ENCODE measurements at regions of chr9 and their contacts with region 1.

Region 1: GRCh38 chr9:124708633-124709291 is 62.3 kb downstream of the NR6A1 start:
- H3K4me3 ChIP-seq: no peak overlapping the region
- H3K27ac ChIP-seq: no peak overlapping the region
- H3K4me1 ChIP-seq: no peaks in the 10 kb centered on the region
- CTCF ChIP-seq: no peak

Region 2: GRCh38 chr9:124551472-124552272 is 157.1 kb before region 1 on chr9:
- CTCF ChIA-PET with region 1: interaction called, 58 read pairs
- POLR2A ChIA-PET with region 1: no interaction called
- H3K4me3 ChIP-seq: no peak overlapping the region
- H3K27ac ChIP-seq: no peak overlapping the region
- H3K4me1 ChIP-seq: no peaks in the 10 kb centered on the region
- CTCF ChIP-seq: peak; percentile 39; the same call in 1 of the 2 replicates

Region 3: GRCh38 chr9:124658165-124659017 is 50.4 kb before region 1 on chr9:
- CTCF ChIA-PET with region 1: interaction called, 36 read pairs
- POLR2A ChIA-PET with region 1: interaction called, 7 read pairs
- H3K4me3 ChIP-seq: peak overlapping the region; percentile 57
- H3K27ac ChIP-seq: peak overlapping the region; percentile 72
- H3K4me1 ChIP-seq: peaks cover 6% of the 10 kb centered on the region; the same call in 1 of the 2 replicates
- CTCF ChIP-seq: no peak

Region 4: GRCh38 chr9:124697326-124698200 is 11.2 kb before region 1 on chr9:
- CTCF ChIA-PET with region 1: interaction called, 34 read pairs
- POLR2A ChIA-PET with region 1: interaction called, 3 read pairs
- H3K4me3 ChIP-seq: no peak overlapping the region
- H3K27ac ChIP-seq: no peak overlapping the region
- H3K4me1 ChIP-seq: peaks cover 22% of the 10 kb centered on the region
- CTCF ChIP-seq: no peak

Region 5: DNA sequence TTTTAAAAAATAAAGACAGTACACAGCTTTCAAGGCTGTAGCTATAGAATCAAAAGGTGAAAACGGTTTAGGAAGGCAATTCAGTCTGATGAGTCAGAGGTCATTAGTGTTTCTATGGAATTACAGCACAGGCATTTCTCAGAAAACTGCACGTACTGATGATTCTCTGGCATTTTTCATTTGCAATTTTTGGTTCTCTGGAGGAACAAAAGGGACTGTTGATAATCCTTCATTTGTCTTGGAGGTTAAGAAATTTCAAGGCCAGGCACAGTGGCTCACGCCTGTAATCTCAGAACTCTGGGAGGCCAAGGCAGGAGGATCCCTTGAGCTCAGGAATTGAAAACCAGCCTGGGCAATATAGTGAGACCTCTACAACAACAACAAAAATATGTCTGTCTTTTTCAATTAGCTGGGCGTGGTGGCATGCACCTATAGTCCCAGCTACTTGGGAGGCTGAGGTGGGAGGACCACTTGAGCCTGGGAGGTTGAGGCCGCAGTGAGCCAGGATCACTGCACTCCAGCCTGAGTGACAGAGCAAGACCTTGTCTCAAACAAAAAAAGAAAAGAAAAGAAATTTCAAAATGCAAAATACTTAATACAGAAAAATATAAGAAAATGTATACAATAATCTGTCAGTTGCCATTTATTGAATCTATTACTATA is 35.1 kb after region 1 on chr9:
- CTCF ChIA-PET with region 1: interaction called, 19 read pairs
- POLR2A ChIA-PET with region 1: no interaction called
- H3K4me3 ChIP-seq: no peak overlapping the region
- H3K27ac ChIP-seq: no peak overlapping the region
- H3K4me1 ChIP-seq: peaks cover 2% of the 10 kb centered on the region; the same call in 1 of the 2 replicates
- CTCF ChIP-seq: no peak

Region 6: GRCh38 chr9:124764774-124765438 is 56.1 kb after region 1 on chr9:
- CTCF ChIA-PET with region 1: interaction called, 46 read pairs
- POLR2A ChIA-PET with region 1: no interaction called
- H3K4me3 ChIP-seq: no peak overlapping the region
- H3K27ac ChIP-seq: no peak overlapping the region
- H3K4me1 ChIP-seq: peaks cover 27% of the 10 kb centered on the region
- CTCF ChIP-seq: no peak

Measured in HEK293 (cell line).